Esophagus muscularis mucosa (tissue), 4 donors: ENCODE measurements at regions of chr9 and their contacts with region 1.

Region 1: DNA sequence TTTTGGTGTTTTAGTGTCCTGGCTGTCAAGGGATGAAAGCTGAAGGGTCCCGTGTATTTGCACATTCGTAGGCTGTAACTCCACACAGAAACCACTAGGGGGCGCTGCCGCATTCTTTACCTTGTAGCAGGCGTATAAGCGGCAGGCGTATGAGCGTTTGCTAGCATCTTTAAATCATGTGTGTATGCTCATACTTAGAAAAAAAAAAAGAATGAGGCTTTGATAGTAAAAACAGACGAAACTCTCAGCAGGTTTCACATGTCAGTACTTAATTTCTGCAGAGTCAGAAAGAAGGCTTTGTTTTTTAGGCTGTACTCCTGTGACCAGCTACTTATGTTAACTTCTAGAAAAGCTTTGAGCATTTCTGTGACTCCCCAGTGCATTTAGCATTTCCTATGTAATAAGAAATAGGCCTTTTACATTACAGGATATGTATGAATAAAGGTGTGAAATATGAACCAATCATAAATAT is 218.8 kb upstream of the ADAMTSL1 start:
- DNase-seq: no peak
- H3K4me3 ChIP-seq: no peak overlapping the region
- H3K27ac ChIP-seq: no peak overlapping the region
- H3K4me1 ChIP-seq: peaks cover 8 to 28% (median 25%) of the 10 kb centered on the region in 4 donors
- H3K27me3 ChIP-seq: no peaks in the 10 kb centered on the region
- CTCF ChIP-seq: peak; percentile 94 to 97 (median 95)
- EP300 ChIP-seq: no peak
- POLR2A ChIP-seq: no peak

Region 2: GRCh38 chr9:18442629-18443491 is 187.7 kb after region 1 on chr9:
- intact Hi-C with region 1: loop called (anchors 1 kb)
- DNase-seq: no peak
- H3K4me3 ChIP-seq: no peak overlapping the region
- H3K27ac ChIP-seq: peak overlapping the region; percentile 11 to 61 (median 36)
- H3K4me1 ChIP-seq: peaks cover 28 to 66% (median 55%) of the 10 kb centered on the region in 4 donors
- H3K27me3 ChIP-seq: no peaks in the 10 kb centered on the region
- CTCF ChIP-seq: peak; percentile 80 to 92 (median 88)
- EP300 ChIP-seq: no peak
- POLR2A ChIP-seq: no peak

Region 3: GRCh38 chr9:18861609-18862544 is 606.7 kb after region 1 on chr9:
- intact Hi-C with region 1: loop called (anchors 10 kb)
- DNase-seq: no peak
- H3K4me3 ChIP-seq: peak overlapping the region; percentile 5 to 26 (median 20)
- H3K27ac ChIP-seq: peak overlapping the region; percentile 64 to 80 (median 73)
- H3K4me1 ChIP-seq: peaks cover 18 to 58% (median 48%) of the 10 kb centered on the region in 4 donors
- H3K27me3 ChIP-seq: no peaks in the 10 kb centered on the region
- CTCF ChIP-seq: peak; percentile 28 to 31 (median 29)
- EP300 ChIP-seq: no peak
- POLR2A ChIP-seq: no peak

Region 4: DNA sequence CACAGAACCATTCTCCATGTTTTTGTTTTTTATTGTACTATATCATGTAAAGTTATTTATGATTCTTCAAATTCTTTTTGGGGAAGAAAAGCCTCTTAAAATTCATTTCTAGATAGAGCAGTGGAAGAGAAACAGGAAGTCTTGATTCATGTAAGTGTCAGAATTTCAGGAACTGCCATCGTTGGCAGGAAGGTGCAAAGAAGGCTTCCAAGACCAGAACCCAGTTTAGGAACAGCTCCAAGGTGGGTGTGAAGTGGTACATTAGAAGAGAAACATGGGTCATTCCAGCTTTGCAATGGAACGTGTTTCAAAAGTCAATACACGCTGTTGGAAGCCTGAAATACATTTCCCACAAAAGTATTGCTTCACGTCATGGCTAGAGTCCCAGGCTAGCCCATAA is 763.0 kb after region 1 on chr9:
- intact Hi-C with region 1: loop called (anchors 5 kb)
- DNase-seq: no peak
- H3K4me3 ChIP-seq: no peak overlapping the region
- H3K27ac ChIP-seq: no peak overlapping the region
- H3K4me1 ChIP-seq: peaks cover 0 to 3% (median under 1%) of the 10 kb centered on the region in 4 donors
- H3K27me3 ChIP-seq: no peaks in the 10 kb centered on the region
- CTCF ChIP-seq: no peak
- EP300 ChIP-seq: no peak
- POLR2A ChIP-seq: no peak

Region 5: GRCh38 chr9:19028835-19029451 is 773.7 kb after region 1 on chr9:
- intact Hi-C with region 1: loop called (anchors 5 kb)
- DNase-seq: no peak
- H3K4me3 ChIP-seq: no peak overlapping the region
- H3K27ac ChIP-seq: no peak overlapping the region
- H3K4me1 ChIP-seq: no peaks in the 10 kb centered on the region
- H3K27me3 ChIP-seq: peaks cover 0 to 4% (median 0%) of the 10 kb centered on the region in 4 donors
- CTCF ChIP-seq: peak; percentile 77 to 80 (median 78)
- EP300 ChIP-seq: no peak
- POLR2A ChIP-seq: no peak